ENCODE measurements at regions of chr11 and their contacts with region 1.

Region 1: GRCh38 chr11:59171508-59172322 is at the start of gene DTX4:
- DNase-seq: peak; percentile 79 to 95
- H3K4me3 ChIP-seq: peak within 1 kb of the TSS; percentile 48 to 95 (median 92)
- H3K27ac ChIP-seq: peak within 1 kb of the TSS; percentile 90
- H3K4me1 ChIP-seq: peaks cover 4 to 10% (median 7%) of the 10 kb centered on the region in 4 experiments; a peak in 6 of 7 replicates
- H3K27me3 ChIP-seq: no peaks in the 10 kb centered on the region
- CTCF ChIP-seq: peak; percentile 90 to 98 (median 95)
- EP300 ChIP-seq: peak in 1 of 2 experiments; percentile 67; a peak in 1 of 3 replicates
- POLR2A ChIP-seq: peak; percentile 63 to 72
- RAD21 ChIP-seq: peak; percentile 91 to 93
- total RNA-seq, gene DTX4: 18.8 and 20.0 TPM in 2 replicates

Region 2: GRCh38 chr11:59012398-59013265 is 159.1 kb before region 1 on chr11:
- CTCF ChIA-PET with region 1: no interaction called
- POLR2A ChIA-PET with region 1: no interaction called
- DNase-seq: no peak
- H3K4me3 ChIP-seq: peak overlapping the region in 1 of 4 experiments; percentile 21; a peak in 1 of 8 replicates
- H3K27ac ChIP-seq: no peak overlapping the region
- H3K4me1 ChIP-seq: peaks cover 3 to 9% (median 7%) of the 10 kb centered on the region in 4 experiments; a peak in 4 of 7 replicates
- H3K27me3 ChIP-seq: no peaks in the 10 kb centered on the region
- CTCF ChIP-seq: no peak
- EP300 ChIP-seq: no peak
- POLR2A ChIP-seq: no peak
- RAD21 ChIP-seq: no peak

Region 3: GRCh38 chr11:59142530-59143507 is 28.9 kb before region 1 on chr11 and contains the start of gene FAM111A:
- CTCF ChIA-PET with region 1: interaction called, 10 read pairs
- POLR2A ChIA-PET with region 1: interaction called, 15 read pairs
- DNase-seq: peak; percentile 67 to 83
- H3K4me3 ChIP-seq: peak within 1 kb of the TSS; percentile 54 to 86 (median 77)
- H3K27ac ChIP-seq: peak within 1 kb of the TSS; percentile 65; the same call in 1 of the 2 replicates
- H3K4me1 ChIP-seq: peaks cover 0 to 8% (median 0%) of the 10 kb centered on the region in 4 experiments; a peak in 4 of 7 replicates
- H3K27me3 ChIP-seq: no peaks in the 10 kb centered on the region; a peak in 1 of 7 replicates
- CTCF ChIP-seq: peak; percentile 25 to 55 (median 29); a peak in 3 of 4 replicates
- EP300 ChIP-seq: no peak
- POLR2A ChIP-seq: peak in 1 of 2 experiments; percentile 18; a peak in 1 of 3 replicates
- RAD21 ChIP-seq: no peak; a peak in 1 of 4 replicates
- total RNA-seq, gene FAM111A: 29.9 and 31.1 TPM in 2 replicates

Region 4: DNA sequence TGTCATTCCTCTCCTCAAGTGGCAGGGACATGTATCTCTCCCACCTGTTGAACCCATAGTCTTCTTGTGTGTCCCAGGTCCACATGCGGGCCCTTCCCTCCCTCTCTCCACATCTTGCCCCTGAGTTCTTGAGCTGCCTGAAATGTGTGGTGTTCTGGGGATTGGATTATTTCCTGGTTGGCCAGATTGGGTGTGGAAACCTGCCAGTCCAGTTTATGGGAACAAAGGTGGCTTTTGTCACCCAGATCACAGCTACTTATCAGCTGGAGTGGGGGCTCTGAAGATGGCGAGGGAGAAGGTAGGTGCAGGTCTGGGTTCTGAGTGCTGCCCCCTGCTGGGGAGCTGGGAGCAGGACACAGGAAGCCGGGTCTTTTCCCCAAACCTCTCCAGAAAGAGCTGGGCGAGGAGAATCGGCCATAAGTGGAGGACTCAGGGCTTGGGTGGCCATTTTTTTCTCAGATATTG is 14.4 kb after region 1 on chr11:
- CTCF ChIA-PET with region 1: interaction called, 201 read pairs
- POLR2A ChIA-PET with region 1: interaction called, 79 read pairs
- DNase-seq: peak in 1 of 2 experiments; percentile 82
- H3K4me3 ChIP-seq: no peak overlapping the region
- H3K27ac ChIP-seq: no peak overlapping the region
- H3K4me1 ChIP-seq: peaks cover 0 to 4% (median 0%) of the 10 kb centered on the region in 4 experiments; a peak in 2 of 7 replicates
- H3K27me3 ChIP-seq: no peaks in the 10 kb centered on the region
- CTCF ChIP-seq: peak; percentile 65 to 73 (median 72)
- EP300 ChIP-seq: no peak
- POLR2A ChIP-seq: no peak
- RAD21 ChIP-seq: peak; percentile 33 to 39; a peak in 3 of 4 replicates

Region 5: GRCh38 chr11:59207988-59208451 is 36.3 kb after region 1 on chr11:
- CTCF ChIA-PET with region 1: interaction called, 96 read pairs
- POLR2A ChIA-PET with region 1: interaction called, 12 read pairs
- DNase-seq: no peak
- H3K4me3 ChIP-seq: no peak overlapping the region
- H3K27ac ChIP-seq: no peak overlapping the region
- H3K4me1 ChIP-seq: peaks cover 0 to 2% (median 0%) of the 10 kb centered on the region in 4 experiments; a peak in 1 of 7 replicates
- H3K27me3 ChIP-seq: no peaks in the 10 kb centered on the region
- CTCF ChIP-seq: peak in 2 of 3 experiments; percentile 64 to 67; a peak in 3 of 4 replicates
- EP300 ChIP-seq: no peak
- POLR2A ChIP-seq: no peak
- RAD21 ChIP-seq: peak; percentile 68 to 69

Region 6: GRCh38 chr11:59429924-59430516 is 258.3 kb after region 1 on chr11:
- CTCF ChIA-PET with region 1: interaction called, 18 read pairs
- POLR2A ChIA-PET with region 1: interaction called, 5 read pairs
- DNase-seq: peak in 1 of 2 experiments; percentile 48
- H3K4me3 ChIP-seq: no peak overlapping the region
- H3K27ac ChIP-seq: no peak overlapping the region
- H3K4me1 ChIP-seq: peaks cover 3 to 5% (median 4%) of the 10 kb centered on the region in 4 experiments; a peak in 6 of 7 replicates
- H3K27me3 ChIP-seq: no peaks in the 10 kb centered on the region
- CTCF ChIP-seq: peak in 2 of 3 experiments; percentile 66 to 84; a peak in 2 of 4 replicates
- EP300 ChIP-seq: no peak
- POLR2A ChIP-seq: no peak
- RAD21 ChIP-seq: peak; percentile 92

Measured in H1 (cell line).